PC-9 (cell line): ENCODE measurements at regions of chr20 and their contacts with region 1.

Region 1: GRCh38 chr20:45470262-45470931 is 844 bp downstream of the WFDC2 start:
- DNase-seq: peak; percentile 63 to 82
- H3K4me3 ChIP-seq: peak overlapping the region; percentile 67
- H3K27ac ChIP-seq: peak overlapping the region; percentile 88
- H3K4me1 ChIP-seq: peaks cover 29% of the 10 kb centered on the region
- H3K27me3 ChIP-seq: no peaks in the 10 kb centered on the region
- CTCF ChIP-seq: no peak

Region 2: DNA sequence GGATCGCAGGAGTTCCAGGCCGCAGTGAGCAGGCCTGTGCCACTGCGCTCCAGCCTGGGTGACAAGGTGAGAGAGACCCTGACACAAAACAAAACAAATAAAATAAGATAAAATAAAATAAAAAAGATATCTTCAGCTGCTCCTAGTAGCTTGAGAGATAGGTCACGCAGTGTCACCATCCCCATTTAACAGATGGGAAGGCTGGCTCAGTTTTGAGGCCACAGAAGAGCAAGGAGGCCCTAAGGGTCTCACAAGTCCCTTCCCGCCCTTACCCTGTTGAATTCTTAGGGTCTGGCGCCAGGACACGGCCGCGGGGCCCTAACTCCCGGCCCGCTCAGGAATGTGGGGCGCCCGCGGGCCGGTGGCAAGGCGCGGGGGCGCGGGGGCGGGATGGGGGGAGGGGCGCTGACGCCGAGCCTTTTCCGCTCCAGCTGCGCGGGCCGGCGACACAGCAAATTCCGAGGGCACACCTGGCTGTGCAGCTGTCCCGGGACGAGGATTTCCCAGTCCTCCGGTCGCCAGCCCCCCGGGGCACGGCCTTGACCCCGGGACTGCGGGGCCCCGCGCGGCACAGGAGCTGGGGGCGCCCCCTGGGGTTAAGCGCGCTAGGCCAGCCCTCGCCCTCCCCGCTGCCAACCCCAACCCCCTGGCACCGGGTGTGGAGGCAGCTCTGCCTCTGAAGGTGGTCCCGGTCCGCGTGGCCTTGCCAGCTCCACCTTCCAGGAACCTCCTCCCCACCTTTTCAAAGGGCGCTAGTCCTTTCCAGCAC is 1143.8 kb before region 1 on chr20:
- CTCF ChIA-PET with region 1: no interaction called
- POLR2A ChIA-PET with region 1: interaction called, 10 read pairs
- intact Hi-C with region 1: no loop called
- DNase-seq: no peak
- H3K4me3 ChIP-seq: no peak overlapping the region
- H3K27ac ChIP-seq: no peak overlapping the region
- H3K4me1 ChIP-seq: no peaks in the 10 kb centered on the region
- H3K27me3 ChIP-seq: no peaks in the 10 kb centered on the region
- CTCF ChIP-seq: no peak

Region 3: DNA sequence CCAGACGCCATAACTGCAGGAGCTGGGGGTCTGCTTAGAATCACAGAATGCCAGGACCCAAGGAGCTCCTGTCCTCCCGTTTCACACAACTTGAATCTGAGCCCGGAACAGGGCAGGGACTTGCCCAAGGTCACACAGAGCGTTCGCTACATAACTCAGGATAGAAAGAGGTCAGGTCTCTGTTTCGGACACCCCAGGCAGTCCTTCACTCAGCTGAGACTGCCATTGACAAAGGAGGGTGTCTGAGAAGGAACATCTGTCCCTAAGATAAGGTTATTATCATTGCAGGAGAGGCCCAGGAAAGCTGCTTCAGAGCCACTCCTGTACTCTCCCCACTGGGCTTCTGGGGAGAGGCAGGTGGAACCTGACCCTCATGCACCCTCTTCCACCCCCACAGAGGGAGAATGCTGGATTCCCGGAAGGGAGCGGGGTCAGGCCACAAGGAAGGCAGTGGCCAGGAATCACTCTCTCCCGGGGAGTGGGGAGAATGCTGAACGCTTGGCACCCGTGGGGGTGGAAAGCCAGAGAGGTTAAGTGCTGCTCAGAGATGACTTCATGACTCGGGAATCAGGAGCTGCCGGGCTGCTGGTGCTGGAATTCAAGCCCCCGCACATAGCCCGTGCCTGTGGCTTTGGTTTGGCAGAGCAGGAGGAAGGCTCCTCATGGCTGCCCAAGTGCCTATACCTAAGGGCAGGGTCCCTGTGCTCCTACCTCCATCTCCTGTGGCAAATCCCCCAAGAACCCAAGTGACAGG is 132.9 kb before region 1 on chr20:
- CTCF ChIA-PET with region 1: no interaction called
- POLR2A ChIA-PET with region 1: no interaction called
- intact Hi-C with region 1: no loop called
- DNase-seq: peak; percentile 77 to 84
- H3K4me3 ChIP-seq: peak overlapping the region; percentile 11; the same call in 1 of the 2 replicates
- H3K27ac ChIP-seq: peak overlapping the region; percentile 81
- H3K4me1 ChIP-seq: peaks cover 70% of the 10 kb centered on the region
- H3K27me3 ChIP-seq: no peaks in the 10 kb centered on the region
- CTCF ChIP-seq: no peak

Region 4: GRCh38 chr20:45487231-45487635 is 16.8 kb after region 1 on chr20:
- CTCF ChIA-PET with region 1: interaction called, 4 read pairs
- POLR2A ChIA-PET with region 1: interaction called, 15 read pairs
- intact Hi-C with region 1: no loop called
- DNase-seq: no peak
- H3K4me3 ChIP-seq: no peak overlapping the region
- H3K27ac ChIP-seq: no peak overlapping the region
- H3K4me1 ChIP-seq: peaks cover 17% of the 10 kb centered on the region
- H3K27me3 ChIP-seq: no peaks in the 10 kb centered on the region
- CTCF ChIP-seq: peak; percentile 21; the same call in 1 of the 2 replicates

Region 5: DNA sequence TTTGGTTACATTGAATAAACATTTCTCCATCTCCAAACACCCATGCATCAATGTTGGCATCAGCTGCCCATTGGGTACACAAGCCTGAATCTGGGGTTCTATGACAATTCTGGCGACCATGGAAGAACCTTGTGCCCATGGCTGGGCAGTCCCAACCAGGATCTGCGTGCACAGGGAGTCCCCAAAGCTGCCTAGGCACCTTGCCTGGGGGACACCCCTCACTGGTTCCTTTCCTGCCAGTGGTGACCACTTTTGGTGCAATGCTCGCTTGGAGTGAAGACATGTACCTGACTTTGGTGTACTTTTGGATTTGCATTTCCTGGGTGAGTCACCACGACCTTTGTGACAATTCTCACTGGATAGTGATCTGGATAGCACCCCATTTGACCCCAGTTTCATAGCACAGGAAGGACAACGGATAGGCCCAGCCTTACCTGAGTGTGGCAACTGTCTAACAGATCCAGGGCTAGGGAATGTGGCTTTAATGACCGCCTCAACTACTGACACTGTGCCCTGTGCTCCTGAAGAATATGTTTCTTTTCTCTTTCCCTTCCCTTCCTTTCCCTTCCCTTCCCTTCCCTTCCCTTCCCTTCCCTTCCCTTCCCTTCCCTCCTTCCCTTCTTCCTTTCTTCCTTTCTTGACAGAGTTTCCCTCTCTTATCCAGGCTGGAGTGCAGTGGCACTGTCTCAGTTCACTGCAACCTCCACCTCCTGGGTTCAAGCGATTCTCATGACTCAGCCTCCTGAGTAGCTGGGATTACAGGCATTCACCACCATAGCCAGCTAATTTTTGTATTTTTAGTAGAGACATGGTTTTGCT is 37.9 kb after region 1 on chr20:
- CTCF ChIA-PET with region 1: no interaction called
- POLR2A ChIA-PET with region 1: no interaction called
- intact Hi-C with region 1: no loop called
- DNase-seq: peak; percentile 61 to 96
- H3K4me3 ChIP-seq: peak overlapping the region; percentile 7; the same call in 1 of the 2 replicates
- H3K27ac ChIP-seq: peak overlapping the region; percentile 95
- H3K4me1 ChIP-seq: peaks cover 45% of the 10 kb centered on the region
- H3K27me3 ChIP-seq: no peaks in the 10 kb centered on the region
- CTCF ChIP-seq: no peak

Region 6: DNA sequence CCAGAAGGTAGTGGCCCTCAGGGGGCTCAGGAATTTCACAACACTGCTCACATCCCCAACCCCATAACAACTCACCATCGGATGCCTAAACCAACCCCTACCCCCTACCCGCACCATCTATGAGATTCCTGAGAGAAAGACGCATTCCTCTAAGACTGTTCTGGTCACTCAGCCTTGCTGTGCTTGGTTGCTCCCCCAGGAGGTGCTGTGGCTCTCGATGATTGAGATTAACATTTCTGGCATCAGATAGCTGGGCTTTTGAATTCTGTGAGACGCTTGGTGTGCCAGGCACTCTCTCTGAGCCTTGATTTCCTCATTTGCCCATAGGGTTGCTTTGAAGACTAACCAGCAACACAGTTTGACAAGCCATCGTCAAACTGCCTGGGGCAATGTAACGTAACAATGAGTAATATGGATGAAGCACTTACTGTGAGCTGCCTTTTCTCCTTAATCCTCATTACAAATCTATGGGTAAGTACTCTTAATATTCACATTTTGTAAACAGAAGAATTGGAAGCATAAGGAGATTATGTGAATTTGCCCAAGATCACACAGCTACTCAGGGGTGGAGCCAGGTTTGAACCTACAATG is 67.9 kb after region 1 on chr20:
- CTCF ChIA-PET with region 1: no interaction called
- POLR2A ChIA-PET with region 1: no interaction called
- intact Hi-C with region 1: loop called (anchors 1 kb)
- DNase-seq: peak in 1 of 2 experiments; percentile 81
- H3K4me3 ChIP-seq: no peak overlapping the region
- H3K27ac ChIP-seq: no peak overlapping the region
- H3K4me1 ChIP-seq: peaks cover 12% of the 10 kb centered on the region
- H3K27me3 ChIP-seq: no peaks in the 10 kb centered on the region
- CTCF ChIP-seq: peak; percentile 53; the same call in 1 of the 2 replicates

Region 7: DNA sequence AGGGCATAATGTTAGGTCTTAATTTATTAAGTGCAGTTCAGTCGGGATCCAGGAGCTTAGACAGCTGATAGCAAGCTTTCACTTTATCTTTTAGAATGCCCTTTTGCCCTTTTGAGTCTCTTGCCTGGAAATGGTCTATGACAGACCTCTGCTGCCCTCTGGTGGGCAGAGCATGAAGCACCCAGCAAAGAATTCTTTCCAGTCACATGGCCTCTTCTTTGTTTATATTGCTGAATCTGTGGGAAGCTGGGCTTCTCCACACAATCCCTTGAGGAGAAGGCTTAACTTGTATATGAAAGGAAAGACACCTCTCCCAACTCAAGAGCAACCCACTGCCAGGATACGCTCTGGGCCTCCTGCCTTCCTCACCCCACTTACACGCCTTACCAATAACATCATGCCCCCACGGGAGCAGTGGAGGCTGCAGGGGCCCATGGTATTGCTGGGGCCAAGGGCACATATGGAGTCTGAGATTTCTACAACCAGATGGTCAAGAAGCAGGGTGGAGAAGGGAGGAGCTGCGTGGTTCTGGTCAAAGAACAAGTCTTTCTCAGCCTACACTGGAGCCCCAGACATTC is 300.9 kb after region 1 on chr20:
- CTCF ChIA-PET with region 1: no interaction called
- POLR2A ChIA-PET with region 1: interaction called, 5 read pairs
- intact Hi-C with region 1: loop called (anchors 10 kb)
- DNase-seq: peak; percentile 74 to 84
- H3K4me3 ChIP-seq: no peak overlapping the region
- H3K27ac ChIP-seq: no peak overlapping the region
- H3K4me1 ChIP-seq: peaks cover 6% of the 10 kb centered on the region
- H3K27me3 ChIP-seq: no peaks in the 10 kb centered on the region
- CTCF ChIP-seq: peak; percentile 98

Region 8: DNA sequence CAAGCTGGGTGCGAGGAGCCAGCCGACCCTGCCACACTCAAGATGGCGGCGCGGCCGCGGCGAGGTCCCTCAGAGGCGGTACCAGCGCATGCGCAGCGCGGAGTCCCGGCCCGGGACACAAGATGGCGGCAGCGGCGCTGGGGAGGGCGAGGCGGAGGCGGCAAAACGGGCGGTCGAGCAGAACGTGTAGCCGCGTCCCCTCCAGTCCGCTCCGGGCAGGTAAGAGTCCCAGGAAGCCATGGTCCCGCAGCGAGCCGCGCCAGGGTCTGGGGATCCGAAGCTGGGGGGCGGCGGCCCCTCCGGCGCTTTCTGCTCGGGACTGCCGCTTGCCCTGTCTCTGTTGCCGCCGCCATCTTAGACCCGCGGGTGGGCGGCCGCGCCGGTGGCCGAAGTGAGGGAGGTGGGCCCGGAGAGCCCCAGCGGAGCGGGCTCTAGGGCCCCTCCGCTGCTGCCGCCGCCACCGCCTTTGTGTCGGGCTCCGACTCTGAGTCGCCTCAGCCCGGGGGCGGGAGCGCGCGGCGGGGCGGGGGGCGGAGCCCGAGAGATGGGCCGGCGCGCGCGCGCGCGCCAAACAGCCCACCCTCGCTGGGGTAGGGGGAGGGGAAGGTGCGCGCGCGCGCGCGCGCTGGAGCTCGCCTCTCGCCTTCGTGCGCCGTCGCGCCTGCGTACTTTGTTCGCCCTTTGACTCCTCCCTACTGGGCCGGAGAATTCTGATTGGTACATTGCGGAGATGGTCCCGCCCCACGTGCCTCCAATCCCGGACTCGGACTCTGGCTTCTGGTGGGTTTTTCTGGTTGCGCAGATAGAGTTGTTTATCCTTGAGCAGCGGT is 464.4 kb after region 1 on chr20 and contains the start of gene PCIF1:
- CTCF ChIA-PET with region 1: no interaction called
- POLR2A ChIA-PET with region 1: interaction called, 12 read pairs
- intact Hi-C with region 1: no loop called
- DNase-seq: peak; percentile 88 to 98
- H3K4me3 ChIP-seq: peak within 1 kb of the TSS; percentile 73
- H3K27ac ChIP-seq: peak within 1 kb of the TSS; percentile 93
- H3K4me1 ChIP-seq: peaks cover 11% of the 10 kb centered on the region
- H3K27me3 ChIP-seq: no peaks in the 10 kb centered on the region
- CTCF ChIP-seq: no peak
- total RNA-seq, gene PCIF1: 35.3 and 35.6 TPM in 2 replicates

Region 9: DNA sequence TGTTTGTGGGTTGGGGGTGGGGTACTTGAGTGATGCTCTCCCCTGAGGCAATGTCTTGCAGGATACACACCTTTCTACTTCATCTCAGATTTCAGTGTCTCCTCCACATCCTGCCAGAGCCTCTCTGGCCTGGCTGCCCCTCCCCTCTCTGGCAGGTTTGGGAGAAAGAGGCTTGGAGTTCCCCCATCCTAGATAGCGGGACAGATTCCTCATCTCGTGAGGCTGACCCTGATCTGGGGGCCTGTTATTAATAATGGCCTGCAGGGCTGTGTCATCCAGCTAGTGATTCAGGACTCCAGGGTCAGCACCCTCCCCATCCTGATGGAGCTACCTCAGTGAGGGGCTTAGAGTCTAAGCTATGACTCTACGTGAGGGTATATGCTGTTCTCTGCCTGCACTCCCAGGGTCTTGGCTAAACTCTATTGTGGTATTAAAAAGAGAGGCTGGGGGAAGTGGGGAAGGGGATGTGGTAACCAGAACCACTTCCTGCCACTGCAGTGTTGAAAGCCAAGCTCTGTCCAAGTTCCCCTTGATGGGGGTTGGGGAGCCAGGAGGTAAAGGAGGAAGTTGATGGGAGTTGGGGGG is 534.6 kb after region 1 on chr20:
- CTCF ChIA-PET with region 1: no interaction called
- POLR2A ChIA-PET with region 1: no interaction called
- intact Hi-C with region 1: no loop called
- DNase-seq: peak; percentile 39 to 46
- H3K4me3 ChIP-seq: no peak overlapping the region
- H3K27ac ChIP-seq: no peak overlapping the region
- H3K4me1 ChIP-seq: peaks cover 23% of the 10 kb centered on the region
- H3K27me3 ChIP-seq: no peaks in the 10 kb centered on the region
- CTCF ChIP-seq: no peak